Dorsolateral prefrontal cortex (tissue), 120 donors: ENCODE measurements at regions of chr16 and their contacts with region 1.

Region 1: GRCh38 chr16:46830902-46831647 is at the start of gene C16orf87:
- DNase-seq: peak; percentile 82 to 97 (median 95)
- H3K4me3 ChIP-seq: peak within 1 kb of the TSS; percentile 63 to 95 (median 84)
- H3K27ac ChIP-seq: peak within 1 kb of the TSS; percentile 40 to 95 (median 87)
- H3K27me3 ChIP-seq: no peaks in the 10 kb centered on the region
- CTCF ChIP-seq: peak in 14 of 56 donors; percentile 5 to 35 (median 14)
- total RNA-seq, gene C16orf87: 5.9 to 21.2 (median 12.9) TPM

Region 2: DNA sequence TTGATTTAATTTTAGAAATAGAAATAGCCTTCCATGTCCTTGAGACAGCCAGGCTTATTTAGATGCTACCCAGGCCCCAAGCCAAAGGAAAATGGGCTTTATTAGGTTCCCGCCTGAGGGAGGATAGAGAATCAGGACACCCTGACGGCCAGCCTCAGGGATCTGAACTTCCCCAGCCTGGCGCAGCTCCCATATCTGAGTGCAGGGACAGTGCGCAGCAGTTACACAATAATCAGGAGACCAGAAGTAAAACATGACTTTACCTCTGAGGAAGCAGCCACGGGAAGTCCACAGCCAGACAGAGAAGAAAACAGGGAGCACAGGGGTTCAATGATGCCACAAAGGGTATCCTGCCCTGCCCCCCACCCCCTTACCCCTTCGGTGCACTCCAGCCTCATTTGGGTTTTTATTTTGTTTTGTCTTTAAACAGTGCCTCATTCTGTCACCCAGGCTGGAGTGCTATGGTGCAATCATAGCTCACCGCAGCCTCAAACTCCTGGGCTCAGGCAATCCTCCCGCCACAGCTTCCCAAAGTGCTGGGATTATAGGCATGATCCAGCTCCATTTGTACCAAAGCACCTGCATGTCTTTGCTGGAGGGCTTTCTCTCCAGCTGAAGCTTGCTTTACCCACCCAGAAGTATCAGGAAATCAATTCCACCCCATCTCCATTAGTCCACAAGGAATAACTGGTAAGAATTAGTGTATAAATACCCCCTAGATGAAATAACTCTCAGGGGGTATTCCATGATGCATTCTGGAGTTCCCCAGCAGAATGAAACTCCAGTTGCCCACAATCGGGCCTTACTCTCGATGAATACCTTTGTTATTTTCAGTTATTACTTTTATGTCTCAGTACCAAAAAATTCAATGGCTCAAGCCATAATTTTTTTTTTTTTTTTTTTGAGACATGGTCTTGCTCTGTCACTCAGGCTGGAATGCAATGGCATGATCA is 119.7 kb before region 1 on chr16:
- intact Hi-C with region 1: no loop called
- DNase-seq: no peak
- H3K4me3 ChIP-seq: no peak overlapping the region
- H3K27ac ChIP-seq: peak overlapping the region in 11 of 59 donors; percentile 7 to 69 (median 28)
- H3K27me3 ChIP-seq: no peaks in the 10 kb centered on the region
- CTCF ChIP-seq: no peak

Region 3: GRCh38 chr16:46859719-46860152 is 28.7 kb after region 1 on chr16:
- intact Hi-C with region 1: no loop called
- DNase-seq: no peak
- H3K4me3 ChIP-seq: no peak overlapping the region
- H3K27ac ChIP-seq: no peak overlapping the region
- H3K27me3 ChIP-seq: no peaks in the 10 kb centered on the region
- CTCF ChIP-seq: no peak

Region 4: GRCh38 chr16:46883690-46884512 is 52.8 kb after region 1 on chr16 and contains the start of gene GPT2:
- intact Hi-C with region 1: loop called in 1 of 2 experiments (anchors 1 kb)
- DNase-seq: peak; percentile 96 to 100 (median 98)
- H3K4me3 ChIP-seq: peak within 1 kb of the TSS; percentile 61 to 98 (median 91)
- H3K27ac ChIP-seq: peak within 1 kb of the TSS; percentile 48 to 97 (median 90)
- H3K27me3 ChIP-seq: no peaks in the 10 kb centered on the region
- CTCF ChIP-seq: peak in 49 of 56 donors; percentile 9 to 69 (median 48)
- total RNA-seq, gene GPT2: 45.9 to 230 (median 67.8) TPM